Breast epithelium (tissue), 4 donors: ENCODE measurements at regions of chr5 and their contacts with region 1.

Region 1: GRCh38 chr5:33743099-33743498 is 148.7 kb downstream of the ADAMTS12 start:
- DNase-seq: no peak
- H3K4me3 ChIP-seq: no peak overlapping the region
- H3K27ac ChIP-seq: peak overlapping the region in 1 of 2 donors; percentile 14
- H3K4me1 ChIP-seq: no peaks in the 10 kb centered on the region
- H3K27me3 ChIP-seq: no peaks in the 10 kb centered on the region
- CTCF ChIP-seq: no peak
- POLR2A ChIP-seq: no peak

Region 2: DNA sequence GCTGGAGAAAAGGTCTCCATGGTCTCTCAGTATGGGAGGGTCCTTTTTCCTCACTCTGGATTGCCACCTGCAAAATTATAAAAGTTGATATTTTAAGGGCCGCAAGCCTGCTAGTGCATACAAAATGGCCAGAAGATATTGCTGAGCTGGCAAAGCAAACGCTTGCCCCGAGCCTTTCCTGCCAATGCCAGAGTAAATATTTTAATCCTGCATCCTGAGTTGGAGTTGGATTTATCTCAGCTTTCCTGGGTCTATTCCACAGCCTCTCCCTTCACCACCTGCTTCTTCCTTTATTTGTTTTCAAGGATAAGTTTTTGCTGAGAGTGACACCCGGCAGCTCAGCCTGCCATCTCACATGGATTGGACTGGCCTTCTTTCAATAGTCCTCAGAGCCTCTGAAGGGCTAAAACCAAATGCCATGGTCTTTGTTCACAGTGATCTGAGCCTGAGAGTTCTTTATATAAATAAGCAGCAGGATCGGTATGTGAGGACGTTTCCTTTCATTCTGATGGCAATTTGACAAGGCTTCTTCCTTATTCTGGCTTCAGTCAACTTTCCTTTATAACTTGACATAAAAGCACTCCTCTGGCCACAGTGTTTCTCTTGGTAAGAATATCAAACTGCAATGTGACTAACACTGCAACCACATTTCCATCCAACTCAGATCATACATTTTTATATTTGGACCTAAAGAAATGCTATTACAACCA is 21.5 kb before region 1 on chr5:
- intact Hi-C with region 1: loop called (anchors 1 kb)
- DNase-seq: no peak
- H3K4me3 ChIP-seq: no peak overlapping the region
- H3K27ac ChIP-seq: peak overlapping the region in 1 of 2 donors; percentile 49
- H3K4me1 ChIP-seq: no peaks in the 10 kb centered on the region
- H3K27me3 ChIP-seq: no peaks in the 10 kb centered on the region
- CTCF ChIP-seq: no peak
- POLR2A ChIP-seq: no peak

Region 3: DNA sequence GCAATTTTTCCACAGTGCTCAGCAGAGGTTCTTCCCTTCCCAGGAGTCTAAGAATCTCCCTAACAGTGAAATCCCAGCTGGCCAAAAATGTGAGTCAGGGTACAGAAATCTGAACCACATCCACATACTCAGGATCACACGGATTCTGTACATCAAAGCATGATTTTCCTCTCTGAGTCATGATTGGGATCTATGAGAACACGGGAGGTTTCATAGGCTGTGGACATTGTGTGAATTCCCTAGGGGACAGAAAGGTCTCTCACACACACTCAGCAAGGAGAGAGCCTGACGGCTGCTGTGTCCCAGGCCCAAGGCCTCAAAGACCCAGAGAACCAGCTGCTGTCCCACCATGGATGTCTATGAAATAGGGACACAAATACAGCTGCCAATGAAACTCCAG is 45.8 kb after region 1 on chr5:
- intact Hi-C with region 1: no loop called
- DNase-seq: no peak
- H3K4me3 ChIP-seq: no peak overlapping the region
- H3K27ac ChIP-seq: peak overlapping the region in 1 of 2 donors; percentile 25
- H3K4me1 ChIP-seq: no peaks in the 10 kb centered on the region
- H3K27me3 ChIP-seq: no peaks in the 10 kb centered on the region
- CTCF ChIP-seq: no peak
- POLR2A ChIP-seq: no peak